ENCODE measurements at regions of chr2 and their contacts with region 1.

Region 1: DNA sequence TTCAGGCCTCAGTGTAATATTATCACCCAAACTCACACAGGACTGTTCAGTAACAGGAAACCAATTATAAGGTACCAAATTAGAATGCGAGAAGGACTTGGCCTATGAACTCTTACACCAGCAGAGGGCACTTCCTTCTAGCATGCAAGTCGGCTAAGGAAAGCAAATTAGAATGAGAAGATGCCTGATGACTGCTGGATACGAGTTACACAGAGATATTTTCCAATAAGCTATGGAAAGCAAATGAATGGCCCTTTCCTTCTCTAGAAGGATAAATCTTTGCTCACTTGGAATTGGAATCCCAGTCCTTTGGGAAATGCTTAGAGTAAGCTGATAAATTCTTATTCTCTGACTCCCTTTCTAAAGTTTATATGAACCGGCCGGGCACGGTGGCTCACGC is 109.8 kb downstream of the AP1S3 start:
- DNase-seq: peak in 7 of 9 donors; percentile 2 to 42 (median 29)
- ATAC-seq: peak; percentile 71
- H3K4me3 ChIP-seq: no peak overlapping the region
- H3K4me3 Mint-ChIP-seq: no peak overlapping the region
- H3K27ac ChIP-seq: no peak overlapping the region
- H3K27ac Mint-ChIP-seq: no peak overlapping the region
- H3K4me1 ChIP-seq: no peaks in the 10 kb centered on the region
- H3K4me1 Mint-ChIP-seq: peaks cover 0 to 1% (median 0%) of the 10 kb centered on the region in 7 donors
- H3K27me3 ChIP-seq: no peaks in the 10 kb centered on the region
- H3K27me3 Mint-ChIP-seq: peaks cover 2 to 7% (median 7%) of the 10 kb centered on the region in 5 donors

Region 2: DNA sequence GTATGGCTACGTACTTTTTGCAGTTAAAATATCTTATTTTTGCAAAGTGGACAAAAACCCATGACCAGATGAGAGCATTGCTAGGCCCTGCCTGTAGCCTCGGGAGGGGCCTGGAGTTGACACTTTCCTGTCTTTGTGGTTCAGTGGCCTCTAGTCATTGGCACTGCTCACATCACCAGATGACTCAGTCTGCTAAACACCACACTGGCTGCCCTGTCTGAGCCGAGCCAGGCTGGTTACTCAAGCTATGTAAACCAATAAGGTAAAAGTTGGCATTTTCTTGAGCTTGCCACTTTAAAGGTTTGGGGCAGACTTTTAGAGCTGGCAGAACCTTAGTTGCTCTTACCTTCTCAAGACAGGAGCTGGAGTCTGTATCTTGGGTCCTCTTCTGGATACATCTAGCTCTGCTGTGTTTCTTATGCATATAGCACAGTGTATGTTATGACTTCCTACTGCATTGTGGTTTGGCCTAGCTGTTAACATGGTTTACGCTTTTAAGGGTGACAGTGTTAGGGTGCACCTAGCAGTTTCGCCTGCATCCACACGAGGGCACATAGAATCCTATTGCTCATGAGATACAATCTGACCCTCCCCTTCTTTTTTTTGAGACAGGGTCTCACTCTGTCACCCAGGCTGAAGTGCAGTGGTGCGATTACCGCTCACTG is 33.4 kb after region 1 on chr2:
- CTCF ChIA-PET with region 1: interaction called, 3 read pairs
- POLR2A ChIA-PET with region 1: no interaction called
- intact Hi-C with region 1: loop called in 1 of 2 experiments (anchors 5 kb)
- DNase-seq: peak in 2 of 9 donors; percentile 6 to 46
- ATAC-seq: peak; percentile 89
- H3K4me3 ChIP-seq: peak overlapping the region; percentile 2
- H3K4me3 Mint-ChIP-seq: peak overlapping the region in 3 of 10 donors; percentile 10 to 52 (median 13)
- H3K27ac ChIP-seq: no peak overlapping the region
- H3K27ac Mint-ChIP-seq: peak overlapping the region in 1 of 9 donors; percentile 87
- H3K4me1 ChIP-seq: peaks cover 0 to 29% of the 10 kb centered on the region in 2 donors
- H3K4me1 Mint-ChIP-seq: peaks cover 0 to 25% (median 4%) of the 10 kb centered on the region in 7 donors
- H3K27me3 ChIP-seq: no peaks in the 10 kb centered on the region
- H3K27me3 Mint-ChIP-seq: no peaks in the 10 kb centered on the region

Region 3: DNA sequence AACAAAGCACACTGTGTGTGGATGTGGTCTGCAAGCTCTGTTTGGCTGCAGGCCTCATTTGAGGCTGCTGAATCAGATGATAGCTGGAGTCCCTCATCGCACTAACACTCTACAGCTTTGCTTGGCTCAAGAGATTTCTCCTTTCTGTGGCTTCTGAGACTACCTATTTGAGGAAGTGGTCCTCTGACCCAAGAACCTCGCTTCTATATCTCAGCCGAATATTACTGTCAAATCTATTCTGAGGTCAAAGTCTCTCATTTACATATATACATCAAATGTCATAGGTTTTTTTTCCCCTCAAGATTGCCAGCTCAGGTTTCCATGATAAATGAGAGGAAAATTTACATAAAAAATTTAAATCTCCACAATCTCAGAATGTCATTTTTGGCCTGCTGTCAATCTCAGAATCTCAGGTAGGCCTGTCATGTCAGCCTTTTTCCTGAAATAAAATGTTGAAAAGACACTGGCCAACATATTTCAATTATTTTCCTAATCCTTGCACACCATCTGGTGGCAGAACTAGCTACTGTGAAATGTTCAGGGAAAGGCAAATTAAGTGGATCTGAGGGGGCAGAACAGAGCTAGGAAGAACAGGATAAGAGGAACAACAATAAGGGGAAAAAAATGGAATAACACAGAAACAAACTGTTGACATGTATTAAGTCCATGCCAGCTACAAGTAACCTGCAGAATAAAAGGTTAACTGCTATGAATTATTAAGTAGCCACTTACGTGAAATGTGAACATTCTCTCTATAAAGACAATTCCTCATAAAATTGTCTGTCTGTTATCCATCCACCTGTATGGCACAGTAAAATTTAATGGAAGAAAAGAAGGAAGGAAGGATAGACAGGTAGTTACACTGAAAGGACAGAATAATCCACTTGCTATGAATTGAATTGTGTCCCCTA is 70.5 kb after region 1 on chr2:
- CTCF ChIA-PET with region 1: no interaction called
- POLR2A ChIA-PET with region 1: no interaction called
- intact Hi-C with region 1: loop called in 1 of 2 experiments (anchors 2 kb)
- DNase-seq: no peak
- ATAC-seq: peak; percentile 37
- H3K4me3 ChIP-seq: no peak overlapping the region
- H3K4me3 Mint-ChIP-seq: no peak overlapping the region
- H3K27ac ChIP-seq: no peak overlapping the region
- H3K27ac Mint-ChIP-seq: no peak overlapping the region
- H3K4me1 ChIP-seq: no peaks in the 10 kb centered on the region
- H3K4me1 Mint-ChIP-seq: peaks cover 0 to 9% (median 0%) of the 10 kb centered on the region in 7 donors
- H3K27me3 ChIP-seq: no peaks in the 10 kb centered on the region
- H3K27me3 Mint-ChIP-seq: no peaks in the 10 kb centered on the region

Region 4: GRCh38 chr2:223868005-223868404 is 140.4 kb after region 1 on chr2:
- CTCF ChIA-PET with region 1: no interaction called
- POLR2A ChIA-PET with region 1: no interaction called
- intact Hi-C with region 1: loop called in 1 of 2 experiments (anchors 5 kb)
- DNase-seq: no peak
- ATAC-seq: no peak
- H3K4me3 ChIP-seq: no peak overlapping the region
- H3K4me3 Mint-ChIP-seq: no peak overlapping the region
- H3K27ac ChIP-seq: no peak overlapping the region
- H3K27ac Mint-ChIP-seq: no peak overlapping the region
- H3K4me1 ChIP-seq: peaks cover 22% of the 10 kb centered on the region in 2 donors
- H3K4me1 Mint-ChIP-seq: peaks cover 19 to 34% (median 24%) of the 10 kb centered on the region in 7 donors
- H3K27me3 ChIP-seq: no peaks in the 10 kb centered on the region
- H3K27me3 Mint-ChIP-seq: no peaks in the 10 kb centered on the region

Region 5: DNA sequence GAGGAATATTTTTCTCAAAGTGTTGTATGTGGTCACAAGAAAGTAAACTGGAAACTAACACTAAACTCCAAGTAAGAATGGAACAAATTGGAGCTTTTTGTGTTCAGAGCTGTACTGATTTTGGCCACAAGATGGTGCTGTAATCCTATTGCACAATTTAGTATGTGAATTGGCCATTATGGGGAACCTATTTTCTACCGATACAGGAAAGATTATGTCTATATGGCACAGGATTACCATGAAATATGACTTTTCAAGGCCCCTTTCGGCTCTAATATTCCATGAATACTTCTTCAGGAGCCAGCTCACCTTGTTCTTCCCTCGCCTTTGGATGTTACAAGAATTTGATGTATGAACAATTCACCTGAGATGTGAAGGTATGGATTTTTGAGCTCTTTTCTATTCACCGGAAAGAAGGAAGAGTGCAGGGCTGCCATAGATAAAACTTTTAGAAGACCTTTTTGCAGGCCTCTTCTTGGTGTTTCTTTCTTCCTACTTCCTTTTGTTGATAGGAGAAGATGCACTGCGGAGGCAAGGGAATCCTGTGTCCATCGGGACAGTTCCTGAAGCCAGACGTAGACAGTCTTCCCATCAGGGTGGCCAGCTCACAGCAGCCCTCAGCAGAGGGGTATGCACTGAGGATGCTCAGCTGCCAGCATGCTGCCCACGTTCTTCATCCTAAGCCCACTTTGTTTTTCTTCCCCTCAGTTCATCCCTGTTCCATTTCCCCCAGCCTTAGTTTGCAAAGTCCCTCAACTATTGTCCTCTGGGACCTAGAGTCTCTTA is 243.0 kb after region 1 on chr2:
- CTCF ChIA-PET with region 1: no interaction called
- POLR2A ChIA-PET with region 1: no interaction called
- intact Hi-C with region 1: no loop called
- DNase-seq: peak in 8 of 9 donors; percentile 27 to 62 (median 54)
- ATAC-seq: peak; percentile 87
- H3K4me3 ChIP-seq: no peak overlapping the region
- H3K4me3 Mint-ChIP-seq: no peak overlapping the region
- H3K27ac ChIP-seq: no peak overlapping the region
- H3K27ac Mint-ChIP-seq: peak overlapping the region in 1 of 9 donors; percentile 28
- H3K4me1 ChIP-seq: no peaks in the 10 kb centered on the region
- H3K4me1 Mint-ChIP-seq: peaks cover 0 to 14% (median 4%) of the 10 kb centered on the region in 7 donors
- H3K27me3 ChIP-seq: no peaks in the 10 kb centered on the region
- H3K27me3 Mint-ChIP-seq: no peaks in the 10 kb centered on the region

Region 6: GRCh38 chr2:224284134-224284946 is 556.8 kb after region 1 on chr2:
- CTCF ChIA-PET with region 1: no interaction called
- POLR2A ChIA-PET with region 1: no interaction called
- intact Hi-C with region 1: loop called (anchors 1 kb)
- DNase-seq: peak in 6 of 9 donors; percentile 8 to 46 (median 42)
- ATAC-seq: peak; percentile 29
- H3K4me3 ChIP-seq: no peak overlapping the region
- H3K4me3 Mint-ChIP-seq: no peak overlapping the region
- H3K27ac ChIP-seq: no peak overlapping the region
- H3K27ac Mint-ChIP-seq: no peak overlapping the region
- H3K4me1 ChIP-seq: no peaks in the 10 kb centered on the region
- H3K4me1 Mint-ChIP-seq: no peaks in the 10 kb centered on the region
- H3K27me3 ChIP-seq: no peaks in the 10 kb centered on the region
- H3K27me3 Mint-ChIP-seq: peaks cover 32 to 39% (median 37%) of the 10 kb centered on the region in 5 donors

Measured in naive thymus-derived CD4-positive, alpha-beta T cell (primary cell).